B cell (primary cell): ENCODE measurements at regions of chr3 and their contacts with region 1.

Region 1: GRCh38 chr3:51519848-51520247 is 18.7 kb upstream of the RAD54L2 start:
- DNase-seq: no peak
- ATAC-seq: no peak
- H3K4me3 ChIP-seq: no peak overlapping the region
- H3K4me3 Mint-ChIP-seq: no peak overlapping the region
- H3K27ac ChIP-seq: no peak overlapping the region
- H3K27ac Mint-ChIP-seq: no peak overlapping the region
- H3K4me1 ChIP-seq: peaks cover 11 to 20% of the 10 kb centered on the region in 2 donors
- H3K4me1 Mint-ChIP-seq: peaks cover 23% of the 10 kb centered on the region
- H3K27me3 ChIP-seq: no peaks in the 10 kb centered on the region
- H3K27me3 Mint-ChIP-seq: no peaks in the 10 kb centered on the region
- CTCF ChIP-seq: no peak

Region 2: GRCh38 chr3:51538459-51539290 is 18.8 kb after region 1 on chr3 and contains the start of gene RAD54L2:
- CTCF ChIA-PET with region 1: no interaction called
- POLR2A ChIA-PET with region 1: interaction called, 7 read pairs
- intact Hi-C with region 1: loop called (anchors 2 kb)
- DNase-seq: peak; percentile 88
- ATAC-seq: peak; percentile 95
- H3K4me3 ChIP-seq: peak within 1 kb of the TSS; percentile 75 to 90 (median 84)
- H3K4me3 Mint-ChIP-seq: peak within 1 kb of the TSS; percentile 90
- H3K27ac ChIP-seq: peak within 1 kb of the TSS; percentile 57 to 90
- H3K27ac Mint-ChIP-seq: peak within 1 kb of the TSS; percentile 93
- H3K4me1 ChIP-seq: peaks cover 21 to 22% of the 10 kb centered on the region in 2 donors
- H3K4me1 Mint-ChIP-seq: peaks cover 31% of the 10 kb centered on the region
- H3K27me3 ChIP-seq: no peaks in the 10 kb centered on the region
- H3K27me3 Mint-ChIP-seq: peaks cover 5% of the 10 kb centered on the region
- CTCF ChIP-seq: no peak
- total RNA-seq, gene RAD54L2: 43.0 and 50.0 TPM in 2 replicates